Naive thymus-derived CD4-positive, alpha-beta T cell (primary cell): ENCODE measurements at regions of chr4 and their contacts with region 1.

Region 1: GRCh38 chr4:28948501-28948900 is 1771.7 kb upstream of the PCDH7 start:
- DNase-seq: no peak
- ATAC-seq: no peak
- H3K4me3 ChIP-seq: no peak overlapping the region
- H3K4me3 Mint-ChIP-seq: no peak overlapping the region
- H3K27ac ChIP-seq: no peak overlapping the region
- H3K27ac Mint-ChIP-seq: no peak overlapping the region
- H3K4me1 ChIP-seq: no peaks in the 10 kb centered on the region
- H3K4me1 Mint-ChIP-seq: no peaks in the 10 kb centered on the region
- H3K27me3 ChIP-seq: no peaks in the 10 kb centered on the region
- H3K27me3 Mint-ChIP-seq: no peaks in the 10 kb centered on the region

Region 2: GRCh38 chr4:27770897-27771296 is 1177.6 kb before region 1 on chr4:
- CTCF ChIA-PET with region 1: no interaction called
- POLR2A ChIA-PET with region 1: no interaction called
- intact Hi-C with region 1: loop called in 1 of 2 experiments (anchors 5 kb)
- DNase-seq: no peak
- ATAC-seq: no peak
- H3K4me3 ChIP-seq: no peak overlapping the region
- H3K4me3 Mint-ChIP-seq: no peak overlapping the region
- H3K27ac ChIP-seq: no peak overlapping the region
- H3K27ac Mint-ChIP-seq: no peak overlapping the region
- H3K4me1 ChIP-seq: no peaks in the 10 kb centered on the region
- H3K4me1 Mint-ChIP-seq: no peaks in the 10 kb centered on the region
- H3K27me3 ChIP-seq: no peaks in the 10 kb centered on the region
- H3K27me3 Mint-ChIP-seq: no peaks in the 10 kb centered on the region

Region 3: GRCh38 chr4:28735540-28735939 is 213.0 kb before region 1 on chr4:
- CTCF ChIA-PET with region 1: no interaction called
- POLR2A ChIA-PET with region 1: no interaction called
- intact Hi-C with region 1: no loop called
- DNase-seq: no peak
- ATAC-seq: no peak
- H3K4me3 ChIP-seq: no peak overlapping the region
- H3K4me3 Mint-ChIP-seq: no peak overlapping the region
- H3K27ac ChIP-seq: no peak overlapping the region
- H3K27ac Mint-ChIP-seq: no peak overlapping the region
- H3K4me1 ChIP-seq: no peaks in the 10 kb centered on the region
- H3K4me1 Mint-ChIP-seq: no peaks in the 10 kb centered on the region
- H3K27me3 ChIP-seq: no peaks in the 10 kb centered on the region
- H3K27me3 Mint-ChIP-seq: no peaks in the 10 kb centered on the region